Activated CD4-positive, alpha-beta T cell treated with anti-CD3 and anti-CD28 coated beads for 36 hours (primary cell): ENCODE measurements at regions of chr7 and their contacts with region 1.

Region 1: DNA sequence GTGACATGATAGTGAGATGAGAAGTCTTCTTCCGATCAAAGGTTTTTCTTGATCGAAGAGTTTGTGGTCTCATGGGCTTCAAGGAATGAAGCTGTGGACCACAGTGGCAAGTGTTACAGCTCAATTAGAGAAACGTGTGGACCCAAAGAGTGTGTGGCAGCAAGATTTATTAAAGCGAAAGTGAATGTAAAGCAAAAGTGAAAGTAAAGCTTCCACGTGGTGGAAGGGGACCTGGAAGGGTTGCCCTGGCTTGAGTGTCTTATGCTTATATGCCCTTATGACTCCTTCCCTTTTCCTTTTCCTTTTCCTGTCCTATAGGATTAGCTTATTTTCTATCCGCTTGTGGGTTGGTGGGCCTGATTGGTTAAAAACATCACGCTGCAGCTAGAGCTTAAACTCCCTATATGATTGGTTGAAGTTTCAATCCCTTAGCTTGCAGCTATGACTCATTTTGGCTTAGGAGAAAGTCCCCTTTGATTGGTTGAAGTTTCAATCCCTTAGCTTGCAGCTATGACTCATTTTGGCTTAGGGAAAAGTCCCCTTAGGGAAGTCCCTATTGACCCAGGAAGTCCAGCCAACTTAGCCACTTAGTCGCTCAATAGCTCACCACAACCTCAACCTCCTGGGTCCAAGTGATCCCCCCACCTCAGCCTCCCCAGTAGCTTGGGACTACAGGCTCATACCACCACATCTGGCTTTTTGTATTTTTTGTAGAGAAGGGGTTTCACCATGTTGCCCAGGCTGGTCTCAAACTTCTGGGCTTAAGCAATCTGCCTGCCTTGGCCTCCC is 34.7 kb downstream of the MRPS24 start:
- DNase-seq: peak; percentile 62
- ATAC-seq: peak; percentile 80
- H3K4me3 Mint-ChIP-seq: peak overlapping the region; percentile 66
- H3K27ac Mint-ChIP-seq: peak overlapping the region; percentile 93
- H3K4me1 Mint-ChIP-seq: peaks cover 30% of the 10 kb centered on the region
- H3K27me3 Mint-ChIP-seq: no peaks in the 10 kb centered on the region

Region 2: DNA sequence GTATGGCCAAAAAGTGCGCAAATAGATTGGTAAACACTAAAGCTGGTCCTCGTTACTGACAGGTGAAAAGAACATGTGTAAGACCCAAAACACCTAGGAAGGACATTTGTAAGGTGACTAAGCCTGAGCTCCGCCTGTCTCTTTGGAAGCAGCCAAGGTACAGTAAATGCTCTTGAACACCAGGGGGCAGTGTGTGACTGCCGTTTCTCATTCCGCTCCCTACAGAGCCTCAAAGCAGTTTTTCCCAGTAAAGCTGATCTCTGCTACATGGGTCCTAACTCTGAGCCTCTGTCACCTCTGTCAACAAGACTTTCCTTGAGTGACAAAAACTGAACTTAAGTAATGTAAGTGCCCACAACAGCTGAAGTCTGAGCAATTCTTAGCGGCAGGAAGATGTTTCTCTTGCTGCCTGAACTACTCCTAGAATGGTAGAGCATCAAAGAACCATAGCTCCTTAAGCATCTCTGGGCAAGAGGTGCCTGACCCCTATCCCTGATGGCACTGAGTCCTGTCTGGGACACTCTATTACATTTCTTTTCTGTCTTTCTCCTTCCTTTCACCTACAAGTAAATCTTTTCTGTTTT is 1893.8 kb before region 1 on chr7:
- CTCF ChIA-PET with region 1: no interaction called
- POLR2A ChIA-PET with region 1: no interaction called
- intact Hi-C with region 1: loop called in 1 of 2 experiments (anchors 5 kb)
- DNase-seq: peak; percentile 68
- ATAC-seq: peak; percentile 87
- H3K4me3 Mint-ChIP-seq: no peak overlapping the region
- H3K27ac Mint-ChIP-seq: no peak overlapping the region
- H3K4me1 Mint-ChIP-seq: peaks cover 6% of the 10 kb centered on the region
- H3K27me3 Mint-ChIP-seq: peaks cover 39% of the 10 kb centered on the region

Region 3: GRCh38 chr7:43071604-43072003 is 763.1 kb before region 1 on chr7:
- CTCF ChIA-PET with region 1: no interaction called
- POLR2A ChIA-PET with region 1: no interaction called
- intact Hi-C with region 1: loop called in 1 of 2 experiments (anchors 10 kb)
- DNase-seq: peak; percentile 63
- ATAC-seq: peak; percentile 36
- H3K4me3 Mint-ChIP-seq: no peak overlapping the region
- H3K27ac Mint-ChIP-seq: no peak overlapping the region
- H3K4me1 Mint-ChIP-seq: peaks cover 8% of the 10 kb centered on the region
- H3K27me3 Mint-ChIP-seq: peaks cover 20% of the 10 kb centered on the region

Region 4: DNA sequence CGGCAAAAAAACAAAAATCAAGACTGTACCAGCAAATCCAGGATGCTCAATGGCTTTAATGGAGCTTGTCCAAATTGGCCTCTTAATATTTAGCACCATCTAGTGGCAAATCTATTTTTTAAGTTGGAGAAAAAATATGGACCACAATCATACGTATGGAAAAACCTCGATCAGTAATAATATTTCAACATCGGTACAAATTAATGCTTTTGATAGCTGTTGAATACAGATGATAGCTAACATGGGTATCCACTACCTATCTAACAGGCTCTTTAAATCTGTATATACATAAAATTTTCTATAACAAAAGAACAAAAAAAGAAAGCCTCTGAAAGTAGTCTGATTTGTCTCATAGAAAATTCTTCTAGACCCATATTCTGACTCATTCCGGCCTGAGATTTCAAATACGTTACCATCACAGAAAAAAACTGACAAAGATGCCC is 134.6 kb before region 1 on chr7:
- CTCF ChIA-PET with region 1: interaction called, 76 read pairs
- POLR2A ChIA-PET with region 1: no interaction called
- intact Hi-C with region 1: loop called (anchors 1 kb)
- DNase-seq: no peak
- ATAC-seq: peak; percentile 42
- H3K4me3 Mint-ChIP-seq: no peak overlapping the region
- H3K27ac Mint-ChIP-seq: no peak overlapping the region
- H3K4me1 Mint-ChIP-seq: peaks cover 56% of the 10 kb centered on the region
- H3K27me3 Mint-ChIP-seq: no peaks in the 10 kb centered on the region

Region 5: GRCh38 chr7:43758029-43758821 is 76.4 kb before region 1 on chr7 and contains the start of gene BLVRA:
- CTCF ChIA-PET with region 1: interaction called, 15 read pairs
- POLR2A ChIA-PET with region 1: no interaction called
- intact Hi-C with region 1: loop called (anchors 1 to 5 kb)
- DNase-seq: peak; percentile 73
- ATAC-seq: peak; percentile 70
- H3K4me3 Mint-ChIP-seq: peak within 1 kb of the TSS; percentile 74
- H3K27ac Mint-ChIP-seq: peak within 1 kb of the TSS; percentile 53
- H3K4me1 Mint-ChIP-seq: peaks cover 42% of the 10 kb centered on the region
- H3K27me3 Mint-ChIP-seq: peaks cover 16% of the 10 kb centered on the region
- total RNA-seq, gene BLVRA: 16.0 to 31.2 TPM

Region 6: GRCh38 chr7:43869006-43869866 is 34.6 kb after region 1 on chr7 and contains the start of gene MRPS24:
- CTCF ChIA-PET with region 1: interaction called, 3 read pairs
- POLR2A ChIA-PET with region 1: no interaction called
- intact Hi-C with region 1: loop called in 1 of 2 experiments (anchors 1 kb)
- DNase-seq: peak; percentile 98
- ATAC-seq: peak; percentile 96
- H3K4me3 Mint-ChIP-seq: peak within 1 kb of the TSS; percentile 83
- H3K27ac Mint-ChIP-seq: peak within 1 kb of the TSS; percentile 84
- H3K4me1 Mint-ChIP-seq: peaks cover 35% of the 10 kb centered on the region
- H3K27me3 Mint-ChIP-seq: no peaks in the 10 kb centered on the region
- total RNA-seq, gene MRPS24: 121 to 149 TPM

Region 7: DNA sequence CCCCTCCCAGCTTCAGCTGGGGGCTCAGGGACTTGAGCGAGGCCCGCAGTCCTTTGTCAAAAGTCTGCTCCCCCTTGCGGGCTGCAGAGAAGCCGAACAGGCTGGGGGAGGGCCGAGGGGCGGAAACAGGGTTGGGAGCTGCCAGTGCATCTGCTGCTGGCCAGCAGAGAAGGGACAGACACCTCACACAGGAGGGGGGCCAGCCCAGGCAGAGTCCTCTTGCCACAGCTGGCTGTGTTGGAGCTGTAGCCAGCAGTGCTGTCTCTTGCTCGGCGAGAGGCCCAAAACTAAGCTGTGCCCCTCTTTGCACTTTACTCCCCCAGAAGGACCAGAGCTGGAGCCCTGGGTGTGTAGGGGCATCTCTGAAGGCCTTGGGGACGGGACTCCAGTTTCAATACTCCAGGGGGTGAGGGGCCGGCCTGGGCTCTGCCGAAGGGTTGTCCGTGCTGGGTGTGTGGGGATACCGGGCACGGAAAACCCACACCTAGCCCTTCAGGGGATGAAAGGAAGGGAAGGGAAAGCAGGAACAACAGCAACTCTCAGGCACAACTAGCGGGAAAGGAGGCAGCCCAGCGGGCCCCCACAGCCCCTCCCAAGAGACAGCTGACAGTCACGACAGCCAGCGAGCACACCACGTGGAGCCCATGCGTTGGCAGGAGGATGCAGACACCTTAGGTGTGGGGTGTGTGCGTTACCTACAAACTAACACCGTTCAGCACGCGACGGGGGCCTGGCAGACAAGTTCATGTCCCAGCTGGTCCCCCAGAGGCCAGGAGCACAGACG is 384.0 kb after region 1 on chr7:
- CTCF ChIA-PET with region 1: no interaction called
- POLR2A ChIA-PET with region 1: no interaction called
- intact Hi-C with region 1: no loop called
- DNase-seq: no peak
- ATAC-seq: no peak
- H3K4me3 Mint-ChIP-seq: no peak overlapping the region
- H3K27ac Mint-ChIP-seq: no peak overlapping the region
- H3K4me1 Mint-ChIP-seq: no peaks in the 10 kb centered on the region
- H3K27me3 Mint-ChIP-seq: no peaks in the 10 kb centered on the region

Region 8: GRCh38 chr7:44606450-44607254 is 772.0 kb after region 1 on chr7 and contains the start of gene OGDH:
- CTCF ChIA-PET with region 1: no interaction called
- POLR2A ChIA-PET with region 1: no interaction called
- intact Hi-C with region 1: no loop called
- DNase-seq: peak; percentile 100
- ATAC-seq: peak; percentile 98
- H3K4me3 Mint-ChIP-seq: peak within 1 kb of the TSS; percentile 92
- H3K27ac Mint-ChIP-seq: peak within 1 kb of the TSS; percentile 97
- H3K4me1 Mint-ChIP-seq: peaks cover 33% of the 10 kb centered on the region
- H3K27me3 Mint-ChIP-seq: no peaks in the 10 kb centered on the region
- total RNA-seq, gene OGDH: 80.3 to 90.1 TPM